HEK293 (cell line): ENCODE measurements at regions of chr4 and their contacts with region 1.

Region 1: DNA sequence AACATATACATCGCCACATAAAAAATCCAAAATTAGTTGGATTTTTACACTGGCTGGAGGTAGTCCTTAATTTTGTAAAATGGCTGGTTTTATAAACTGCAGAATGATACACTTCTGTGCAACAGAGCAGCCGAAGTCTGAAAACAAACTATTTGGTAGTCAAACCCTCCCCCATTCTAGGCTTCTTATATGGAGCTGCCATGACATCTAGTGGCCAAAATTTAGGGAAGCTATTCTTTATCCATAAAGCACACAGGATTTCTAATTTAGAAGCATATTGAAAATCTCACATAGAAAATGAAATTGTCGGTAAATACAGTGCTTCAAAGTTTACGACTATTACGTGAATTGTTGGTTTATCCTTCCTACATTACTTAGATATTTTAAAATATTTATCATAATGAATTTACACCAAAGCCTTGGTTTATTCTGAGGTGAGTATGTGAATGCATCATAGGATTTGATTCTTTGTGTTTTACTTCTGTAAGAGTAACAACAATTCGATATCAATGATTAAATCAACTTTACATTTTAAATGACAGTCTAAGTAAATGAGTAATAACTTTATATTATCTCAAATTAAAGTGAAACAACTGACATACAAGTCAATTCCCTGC is 113.4 kb upstream of the FAM241A start:
- H3K4me3 ChIP-seq: no peak overlapping the region
- H3K27ac ChIP-seq: no peak overlapping the region
- H3K4me1 ChIP-seq: no peaks in the 10 kb centered on the region
- CTCF ChIP-seq: peak; percentile 46; the same call in 1 of the 2 replicates

Region 2: GRCh38 chr4:111641955-111642579 is 389.8 kb before region 1 on chr4:
- CTCF ChIA-PET with region 1: interaction called, 16 read pairs
- POLR2A ChIA-PET with region 1: no interaction called
- H3K4me3 ChIP-seq: no peak overlapping the region
- H3K27ac ChIP-seq: no peak overlapping the region
- H3K4me1 ChIP-seq: no peaks in the 10 kb centered on the region
- CTCF ChIP-seq: peak; percentile 69

Region 3: DNA sequence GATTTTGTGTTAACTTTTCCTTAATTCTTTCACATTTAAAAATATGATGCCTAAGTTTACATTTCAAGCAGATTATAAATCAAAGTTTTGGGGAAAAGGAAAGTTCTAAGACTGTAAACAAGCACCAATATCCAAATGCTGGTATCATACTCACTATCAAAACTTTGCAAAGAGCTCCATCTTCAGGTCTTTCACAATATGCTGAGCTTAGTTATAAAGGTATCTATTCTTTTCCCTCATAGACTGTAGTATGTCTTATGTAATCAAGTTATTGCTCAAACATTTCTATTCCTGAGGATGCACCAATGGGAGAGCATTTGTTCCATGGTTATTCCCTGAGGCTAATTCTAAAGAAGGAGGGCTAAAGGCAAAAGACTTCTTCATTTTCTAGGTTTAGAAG is 94.5 kb before region 1 on chr4:
- CTCF ChIA-PET with region 1: interaction called, 43 read pairs
- POLR2A ChIA-PET with region 1: no interaction called
- H3K4me3 ChIP-seq: no peak overlapping the region
- H3K27ac ChIP-seq: no peak overlapping the region
- H3K4me1 ChIP-seq: no peaks in the 10 kb centered on the region
- CTCF ChIP-seq: no peak

Region 4: DNA sequence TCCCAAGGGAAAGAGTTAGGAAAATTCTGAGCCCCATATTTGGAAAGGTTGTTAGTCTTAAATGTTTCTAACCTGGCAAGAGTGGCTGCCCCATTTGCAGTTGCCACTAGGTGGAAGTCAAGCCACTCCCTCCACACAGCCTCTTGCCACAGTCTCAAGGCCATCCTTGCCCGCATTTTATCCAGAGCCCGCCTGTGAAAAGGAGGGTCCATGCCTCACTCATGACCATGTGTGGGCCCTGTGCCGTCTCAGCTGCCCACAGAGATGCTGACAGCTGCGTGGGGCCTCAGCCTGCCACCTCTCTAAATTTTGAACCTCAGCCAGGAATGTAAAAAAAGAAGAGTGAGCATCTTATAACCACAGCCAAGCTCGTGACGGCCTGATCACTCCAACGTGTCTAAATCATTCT is 88.0 kb before region 1 on chr4:
- CTCF ChIA-PET with region 1: interaction called, 43 read pairs
- POLR2A ChIA-PET with region 1: no interaction called
- H3K4me3 ChIP-seq: no peak overlapping the region
- H3K27ac ChIP-seq: no peak overlapping the region
- H3K4me1 ChIP-seq: no peaks in the 10 kb centered on the region
- CTCF ChIP-seq: peak; percentile 46

Region 5: GRCh38 chr4:111986095-111986494 is 45.7 kb before region 1 on chr4:
- CTCF ChIA-PET with region 1: no interaction called
- POLR2A ChIA-PET with region 1: no interaction called
- H3K4me3 ChIP-seq: no peak overlapping the region
- H3K27ac ChIP-seq: no peak overlapping the region
- H3K4me1 ChIP-seq: no peaks in the 10 kb centered on the region; the same call in 1 of the 2 replicates
- CTCF ChIP-seq: no peak

Region 6: GRCh38 chr4:112231779-112232713 is 200.2 kb after region 1 on chr4 and contains the start of gene AP1AR:
- CTCF ChIA-PET with region 1: no interaction called
- POLR2A ChIA-PET with region 1: no interaction called
- H3K4me3 ChIP-seq: peak within 1 kb of the TSS; percentile 65
- H3K27ac ChIP-seq: peak within 1 kb of the TSS; percentile 72
- H3K4me1 ChIP-seq: no peaks in the 10 kb centered on the region
- CTCF ChIP-seq: peak; percentile 60; the same call in 1 of the 2 replicates

Region 7: DNA sequence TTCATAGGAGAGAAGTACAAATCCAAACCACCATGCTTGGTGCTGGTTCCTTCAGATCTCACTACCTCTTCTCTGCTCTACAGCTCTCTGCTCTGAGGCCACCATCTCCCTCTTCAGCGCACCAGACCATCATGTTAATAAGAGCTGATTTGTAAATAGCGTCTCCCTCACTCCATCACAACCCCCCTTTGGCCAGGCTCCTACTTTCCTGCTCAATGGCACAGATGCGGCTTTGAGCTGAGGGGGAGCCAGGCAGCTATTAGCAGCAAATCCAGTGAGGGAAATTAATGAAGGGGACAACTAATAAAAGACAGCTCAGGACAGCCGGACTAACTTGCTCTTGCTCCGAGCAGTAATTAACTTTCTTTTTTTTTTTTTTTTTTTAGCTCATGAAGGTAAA is 471.1 kb after region 1 on chr4:
- CTCF ChIA-PET with region 1: no interaction called
- POLR2A ChIA-PET with region 1: no interaction called
- H3K4me3 ChIP-seq: no peak overlapping the region
- H3K27ac ChIP-seq: no peak overlapping the region
- H3K4me1 ChIP-seq: no peaks in the 10 kb centered on the region
- CTCF ChIP-seq: no peak